A549 (cell line): ENCODE measurements at regions of chr19 and their contacts with region 1.

Region 1: DNA sequence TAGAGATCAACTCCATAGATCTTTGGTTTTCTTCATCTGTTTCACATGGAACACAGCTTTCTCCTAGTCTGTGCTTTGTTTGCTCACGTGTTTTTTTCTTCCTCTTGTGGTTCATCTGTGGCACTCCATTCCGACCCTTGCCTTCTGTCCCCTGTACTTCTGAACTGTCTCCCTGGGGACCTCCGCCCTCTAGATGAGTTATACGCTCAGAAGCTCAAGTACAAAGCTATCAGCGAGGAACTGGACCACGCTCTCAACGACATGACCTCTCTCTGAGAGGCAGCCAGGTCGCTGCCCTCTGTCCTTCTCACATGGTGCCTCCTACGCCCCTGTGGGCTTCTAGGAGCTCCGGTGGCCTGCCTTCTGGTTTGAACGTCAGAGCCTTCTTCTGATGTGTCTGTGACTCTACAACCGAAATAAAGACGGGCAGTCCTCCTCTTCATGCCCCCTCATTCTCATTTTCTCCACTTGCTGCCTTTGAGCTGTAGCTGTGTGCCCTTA is 16.6 kb upstream of the RAB8A start:
- DNase-seq: no peak
- ATAC-seq: no peak
- H3K4me3 ChIP-seq: no peak overlapping the region
- H3K27ac ChIP-seq: peak overlapping the region; percentile 87 to 89; a peak in 5 of 6 replicates
- H3K4me1 ChIP-seq: peaks cover 82% of the 10 kb centered on the region
- CTCF ChIP-seq: no peak
- EP300 ChIP-seq: no peak
- POLR2A ChIP-seq: no peak
- RAD21 ChIP-seq: no peak

Region 2: DNA sequence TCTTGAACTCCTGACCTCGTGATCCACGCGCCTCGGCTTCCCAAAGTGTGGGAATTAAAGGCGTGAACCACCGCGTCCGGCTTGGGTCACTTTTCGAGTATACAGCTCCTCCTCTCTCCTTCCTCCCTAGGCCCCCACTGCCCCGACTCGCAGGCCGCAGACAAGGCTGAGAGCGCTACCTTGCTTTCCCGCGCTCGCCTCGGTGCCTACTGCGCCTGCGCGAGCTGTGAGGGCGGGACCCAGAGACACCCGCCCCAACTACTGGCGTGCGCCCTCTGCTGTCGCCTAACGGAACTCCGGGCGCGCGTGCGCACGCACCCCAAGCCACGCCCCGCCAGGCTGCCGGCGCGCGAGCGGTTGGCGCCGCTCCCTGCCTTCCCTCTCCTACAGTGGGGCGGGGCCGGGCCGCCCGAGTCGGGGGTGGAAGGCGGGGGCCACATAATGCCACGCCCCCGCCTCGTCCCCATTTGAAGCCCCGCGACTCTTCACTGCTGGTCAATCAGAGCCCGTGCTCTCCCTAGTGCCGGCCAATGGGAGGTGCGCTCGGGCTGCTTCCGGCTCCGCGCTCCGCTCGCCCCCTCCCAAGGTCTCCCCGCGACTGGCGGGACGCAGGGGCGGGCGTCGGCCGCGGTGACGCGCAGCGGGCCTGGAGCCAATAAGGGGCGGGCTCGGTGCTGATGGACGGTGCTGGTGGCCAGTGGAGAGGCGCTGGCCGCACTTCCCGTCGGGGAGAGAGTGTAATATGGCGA is 16.2 kb after region 1 on chr19 and contains the start of gene RAB8A:
- CTCF ChIA-PET with region 1: interaction called, 12 read pairs
- POLR2A ChIA-PET with region 1: no interaction called
- DNase-seq: peak; percentile 93 to 98
- ATAC-seq: peak; percentile 95 to 96
- H3K4me3 ChIP-seq: peak within 1 kb of the TSS; percentile 99
- H3K27ac ChIP-seq: peak within 1 kb of the TSS; percentile 96 to 98
- H3K4me1 ChIP-seq: peaks cover 20% of the 10 kb centered on the region
- CTCF ChIP-seq: peak; percentile 69
- EP300 ChIP-seq: no peak
- POLR2A ChIP-seq: peak; percentile 50
- RAD21 ChIP-seq: peak; percentile 52 to 73
- polyA plus RNA-seq, gene RAB8A: 69.4 and 91.4 TPM in 2 replicates